ENCODE measurements at regions of chr9 and their contacts with region 1.

Region 1: GRCh38 chr9:1100945-1101344 is 50.8 kb downstream of the DMRT2 start:
- DNase-seq: peak; percentile 67
- ATAC-seq: peak; percentile 84

Region 2: DNA sequence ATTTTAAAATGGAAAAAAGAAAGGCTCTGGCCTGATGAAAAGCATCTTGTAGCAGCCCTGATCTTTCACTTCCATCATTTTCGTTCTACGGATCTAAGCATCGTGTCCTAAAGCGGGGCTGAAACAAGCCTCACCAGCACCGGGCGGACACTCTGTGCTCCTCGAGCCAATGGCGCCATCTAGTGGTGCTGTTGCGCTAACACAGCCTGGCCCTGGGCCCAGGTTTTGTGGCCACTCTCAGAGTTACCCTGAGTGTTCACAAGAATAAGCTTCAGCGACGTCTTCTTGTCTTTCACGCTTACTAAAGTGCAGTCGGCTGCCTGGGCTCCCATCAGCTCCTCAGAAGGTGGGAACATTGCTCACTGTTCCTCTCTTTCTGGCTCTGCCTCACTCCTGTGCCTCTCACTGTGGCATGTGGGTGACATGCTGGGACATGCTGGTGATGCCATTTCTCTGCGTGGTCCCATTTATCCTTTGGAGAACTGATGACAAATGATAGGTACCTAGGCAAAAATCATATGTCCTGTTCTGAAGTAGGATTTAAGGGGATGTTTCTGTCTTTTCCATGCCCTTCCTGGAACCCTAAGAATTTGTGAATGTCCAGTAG is 91.7 kb before region 1 on chr9:
- intact Hi-C with region 1: no loop called
- DNase-seq: peak; percentile 87
- ATAC-seq: peak; percentile 95

Region 3: GRCh38 chr9:1200847-1201251 is 99.9 kb after region 1 on chr9:
- intact Hi-C with region 1: loop called (anchors 5 kb)
- DNase-seq: no peak
- ATAC-seq: peak; percentile 90

Region 4: DNA sequence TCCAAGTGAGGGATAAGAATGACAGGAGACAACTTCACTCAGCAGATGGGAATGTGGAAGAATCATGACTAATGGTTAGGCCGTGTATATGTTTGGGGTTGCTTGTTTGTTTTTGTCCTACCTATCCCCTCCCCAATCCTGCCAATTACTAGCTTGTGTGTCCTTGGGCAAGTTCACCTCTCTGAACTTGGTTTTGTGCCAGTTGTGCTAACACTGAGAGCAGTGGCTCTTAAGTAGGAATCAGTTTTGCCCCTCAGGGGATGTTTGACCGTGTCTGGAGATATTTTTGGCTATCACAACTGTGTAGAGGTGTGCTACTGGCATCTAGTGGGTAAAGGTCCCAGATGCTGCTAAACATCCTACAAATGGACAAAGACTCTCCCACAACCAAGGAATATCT is 236.2 kb after region 1 on chr9:
- intact Hi-C with region 1: loop called (anchors 2 kb)
- DNase-seq: no peak
- ATAC-seq: no peak

Region 5: GRCh38 chr9:1429297-1429696 is 328.4 kb after region 1 on chr9:
- intact Hi-C with region 1: loop called (anchors 2 kb)
- DNase-seq: no peak
- ATAC-seq: no peak

Region 6: GRCh38 chr9:2181792-2182191 is 1080.8 kb after region 1 on chr9:
- intact Hi-C with region 1: no loop called
- DNase-seq: peak; percentile 45
- ATAC-seq: no peak

Measured in Right ventricle myocardium inferior (tissue), 1 donor.